ENCODE measurements at regions of chr3 and their contacts with region 1.

Region 1: DNA sequence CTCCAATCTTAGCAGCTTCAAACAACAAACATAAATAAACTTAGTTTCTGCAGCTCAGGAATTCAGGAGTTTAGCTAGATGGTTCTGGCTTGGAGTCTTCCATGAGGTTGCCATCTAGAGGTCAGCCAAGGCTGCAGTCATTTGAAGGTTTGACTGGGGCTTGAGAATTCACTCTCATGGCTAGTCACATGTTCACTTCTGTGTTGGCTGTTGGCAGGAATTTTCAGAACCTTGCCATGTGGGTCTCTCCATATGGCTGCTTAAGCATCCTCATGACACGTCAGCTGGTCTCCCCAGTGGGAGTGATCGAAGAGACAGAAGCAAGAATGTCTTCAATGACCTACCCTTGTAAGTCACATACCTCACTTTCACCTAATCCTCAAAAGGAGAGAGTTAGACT is 269.2 kb upstream of the CNTN3 start:
- DNase-seq: peak; percentile 5
- ATAC-seq: peak; percentile 48; the same call in 1 of the 2 replicates
- H3K4me3 ChIP-seq: no peak overlapping the region
- H3K27ac ChIP-seq: no peak overlapping the region
- H3K4me1 ChIP-seq: no peaks in the 10 kb centered on the region
- H3K27me3 ChIP-seq: no peaks in the 10 kb centered on the region
- CTCF ChIP-seq: peak; percentile 36
- POLR2A ChIP-seq: no peak
- RAD21 ChIP-seq: peak; percentile 35

Region 2: DNA sequence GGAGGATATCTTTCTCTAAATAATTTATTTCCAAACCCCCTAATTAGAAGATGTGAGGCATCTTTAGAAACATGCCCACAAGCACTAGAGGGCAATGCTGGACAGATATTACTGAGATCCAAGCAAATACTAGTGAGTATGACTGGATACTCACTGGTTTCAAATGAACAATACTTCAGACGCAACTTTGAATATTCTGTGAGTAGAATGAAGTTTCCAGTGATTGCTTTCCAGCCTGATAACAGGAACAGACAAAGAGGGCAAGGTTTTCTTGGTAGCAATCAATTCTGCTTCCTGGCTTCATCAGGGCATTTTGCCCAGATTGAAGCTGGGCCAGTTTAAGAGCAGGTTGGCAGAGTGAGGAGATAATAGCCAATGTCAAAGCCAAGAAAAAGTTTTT is 816.4 kb before region 1 on chr3:
- CTCF ChIA-PET with region 1: no interaction called
- POLR2A ChIA-PET with region 1: no interaction called
- dilution Hi-C with region 1: no loop called
- in situ Hi-C with region 1: no loop called
- intact Hi-C with region 1: loop called (anchors 5 kb)
- DNase-seq: peak; percentile 32
- ATAC-seq: peak; percentile 86
- H3K4me3 ChIP-seq: no peak overlapping the region
- H3K27ac ChIP-seq: no peak overlapping the region
- H3K4me1 ChIP-seq: no peaks in the 10 kb centered on the region
- H3K27me3 ChIP-seq: no peaks in the 10 kb centered on the region
- CTCF ChIP-seq: peak; percentile 55
- POLR2A ChIP-seq: no peak
- RAD21 ChIP-seq: peak; percentile 62

Region 3: GRCh38 chr3:74267588-74268184 is 616.0 kb before region 1 on chr3:
- CTCF ChIA-PET with region 1: no interaction called
- POLR2A ChIA-PET with region 1: no interaction called
- dilution Hi-C with region 1: no loop called
- in situ Hi-C with region 1: no loop called
- intact Hi-C with region 1: loop called (anchors 10 kb)
- DNase-seq: peak; percentile 63
- ATAC-seq: peak; percentile 81
- H3K4me3 ChIP-seq: no peak overlapping the region
- H3K27ac ChIP-seq: no peak overlapping the region
- H3K4me1 ChIP-seq: no peaks in the 10 kb centered on the region; the same call in 1 of the 2 replicates
- H3K27me3 ChIP-seq: no peaks in the 10 kb centered on the region
- CTCF ChIP-seq: peak; percentile 63
- POLR2A ChIP-seq: no peak
- RAD21 ChIP-seq: peak; percentile 60

Region 4: GRCh38 chr3:74375653-74376052 is 508.0 kb before region 1 on chr3:
- CTCF ChIA-PET with region 1: no interaction called
- POLR2A ChIA-PET with region 1: no interaction called
- dilution Hi-C with region 1: no loop called
- in situ Hi-C with region 1: no loop called
- intact Hi-C with region 1: loop called (anchors 10 kb)
- DNase-seq: no peak
- ATAC-seq: no peak
- H3K4me3 ChIP-seq: no peak overlapping the region
- H3K27ac ChIP-seq: no peak overlapping the region
- H3K4me1 ChIP-seq: no peaks in the 10 kb centered on the region
- H3K27me3 ChIP-seq: no peaks in the 10 kb centered on the region
- CTCF ChIP-seq: no peak
- POLR2A ChIP-seq: no peak
- RAD21 ChIP-seq: no peak

Measured in IMR-90 (cell line).